ENCODE measurements at regions of chr1 and their contacts with region 1.

Region 1: DNA sequence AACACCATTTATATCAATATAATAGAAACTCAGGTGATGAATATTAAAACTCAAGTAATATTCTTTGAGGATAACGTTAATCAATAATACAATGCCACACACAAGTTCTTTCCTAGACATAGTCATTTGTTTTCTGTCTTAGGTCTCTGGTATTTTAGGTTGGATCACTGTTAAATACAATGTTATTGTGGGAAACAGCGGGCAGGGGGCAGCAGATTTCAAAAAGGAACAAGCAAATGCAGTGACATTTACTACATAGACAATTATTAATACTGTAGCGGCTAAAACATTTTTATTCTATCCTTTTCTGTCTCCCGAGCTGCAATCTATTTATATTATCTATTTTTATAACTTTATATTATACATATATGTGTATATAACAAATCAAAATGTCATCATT is 186.4 kb upstream of the ZNHIT6 start:
- DNase-seq: peak; percentile 51
- CTCF ChIP-seq: peak; percentile 61

Region 2: GRCh38 chr1:85734931-85735330 is 159.7 kb before region 1 on chr1:
- in situ Hi-C with region 1: no loop called
- DNase-seq: no peak
- CTCF ChIP-seq: no peak

Region 3: DNA sequence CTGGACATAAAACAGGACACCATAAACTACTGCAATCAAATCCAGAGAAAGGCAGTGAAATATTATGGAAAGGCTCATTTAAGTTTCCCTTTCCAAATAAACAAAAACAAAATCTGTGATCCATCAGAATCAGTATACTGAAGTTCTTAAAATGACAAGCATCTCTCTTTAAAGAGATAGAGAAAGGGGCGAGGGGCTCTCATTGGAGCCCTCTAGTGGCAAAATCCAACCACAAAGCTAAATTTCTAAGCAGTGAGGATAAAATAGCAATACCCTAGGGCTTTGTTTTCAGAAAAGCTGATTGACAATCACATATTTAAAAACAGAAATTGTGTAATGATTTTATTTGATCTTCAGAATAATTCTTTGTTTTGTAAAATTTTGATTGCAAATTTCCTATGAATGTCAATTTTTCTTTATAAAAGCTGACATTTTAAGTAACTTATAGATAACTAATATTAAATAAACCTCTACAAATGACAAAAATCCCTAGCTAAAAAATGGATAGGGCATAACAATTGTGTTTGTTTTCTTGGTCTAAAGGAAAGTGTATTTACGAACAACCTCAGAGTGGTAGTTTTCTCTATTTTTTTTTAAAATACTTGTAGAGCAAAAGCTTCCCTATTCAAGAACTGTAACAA is 123.8 kb after region 1 on chr1:
- in situ Hi-C with region 1: loop called (anchors 10 kb)
- DNase-seq: peak; percentile 40
- CTCF ChIP-seq: peak; percentile 66

Measured in GM13977 (cell line).